ENCODE measurements at regions of chr18 and their contacts with region 1.

Region 1: DNA sequence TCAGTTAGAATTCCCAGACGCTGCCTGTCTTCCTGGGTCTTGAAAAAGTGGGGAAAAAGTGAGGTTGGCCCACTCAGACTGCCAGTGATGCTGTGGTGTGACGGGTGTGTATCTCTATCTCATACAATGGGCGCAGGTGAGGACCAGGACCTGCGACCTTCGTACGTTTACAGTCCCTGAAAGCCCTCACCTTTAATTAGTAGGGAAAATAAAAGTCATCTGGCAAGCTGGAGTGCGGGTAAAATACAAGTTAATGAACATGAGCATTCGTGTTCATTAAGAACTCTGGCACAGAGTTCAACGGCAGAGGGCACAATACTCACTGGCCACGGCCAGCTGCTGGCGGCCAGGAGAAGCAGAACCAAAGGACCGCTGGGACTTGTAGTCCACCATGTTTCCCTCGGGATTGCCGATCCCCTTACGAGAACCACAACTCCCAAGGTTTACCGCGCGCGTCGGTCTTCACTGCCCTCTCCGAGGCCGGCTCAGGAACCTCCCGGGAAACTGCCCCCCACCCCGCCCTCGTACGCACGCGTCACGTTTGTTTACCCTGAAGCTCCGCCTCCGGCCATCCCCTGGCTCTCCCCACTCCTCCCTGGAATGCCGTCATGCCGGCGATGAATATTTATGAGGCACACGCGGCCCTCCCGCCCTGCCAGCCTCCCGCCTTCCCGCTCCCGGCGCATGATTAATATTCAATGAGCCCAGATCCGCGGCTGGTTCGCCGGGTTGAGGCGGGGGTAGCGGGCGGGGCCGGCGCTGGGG is 488 bp upstream of the PHLPP1 start:
- DNase-seq: peak; percentile 100
- H3K4me3 ChIP-seq: peak overlapping the region; percentile 59
- H3K4me1 ChIP-seq: peaks cover 5% of the 10 kb centered on the region
- H3K27me3 ChIP-seq: no peaks in the 10 kb centered on the region

Region 2: GRCh38 chr18:62621546-62621945 is 93.3 kb before region 1 on chr18:
- in situ Hi-C with region 1: no loop called
- DNase-seq: no peak
- H3K4me3 ChIP-seq: no peak overlapping the region
- H3K4me1 ChIP-seq: peaks cover 3% of the 10 kb centered on the region; the same call in 1 of the 2 replicates
- H3K27me3 ChIP-seq: peaks cover 5% of the 10 kb centered on the region; the same call in 1 of the 2 replicates

Region 3: GRCh38 chr18:62881509-62882016 is 166.7 kb after region 1 on chr18:
- in situ Hi-C with region 1: loop called (anchors 10 kb)
- DNase-seq: no peak
- H3K4me3 ChIP-seq: no peak overlapping the region
- H3K4me1 ChIP-seq: peaks cover 32% of the 10 kb centered on the region
- H3K27me3 ChIP-seq: no peaks in the 10 kb centered on the region

Region 4: GRCh38 chr18:62982600-62983251 is 267.9 kb after region 1 on chr18:
- in situ Hi-C with region 1: loop called (anchors 5 kb)
- DNase-seq: peak; percentile 69 to 82
- H3K4me3 ChIP-seq: no peak overlapping the region
- H3K4me1 ChIP-seq: no peaks in the 10 kb centered on the region; the same call in none of the 2 replicates
- H3K27me3 ChIP-seq: no peaks in the 10 kb centered on the region

Region 5: GRCh38 chr18:62999392-62999791 is 284.5 kb after region 1 on chr18:
- in situ Hi-C with region 1: no loop called
- DNase-seq: no peak
- H3K4me3 ChIP-seq: no peak overlapping the region
- H3K4me1 ChIP-seq: peaks cover 3% of the 10 kb centered on the region; the same call in 1 of the 2 replicates
- H3K27me3 ChIP-seq: no peaks in the 10 kb centered on the region